Gastrocnemius medialis (tissue), 4 donors: ENCODE measurements at regions of chr10 and their contacts with region 1.

Region 1: DNA sequence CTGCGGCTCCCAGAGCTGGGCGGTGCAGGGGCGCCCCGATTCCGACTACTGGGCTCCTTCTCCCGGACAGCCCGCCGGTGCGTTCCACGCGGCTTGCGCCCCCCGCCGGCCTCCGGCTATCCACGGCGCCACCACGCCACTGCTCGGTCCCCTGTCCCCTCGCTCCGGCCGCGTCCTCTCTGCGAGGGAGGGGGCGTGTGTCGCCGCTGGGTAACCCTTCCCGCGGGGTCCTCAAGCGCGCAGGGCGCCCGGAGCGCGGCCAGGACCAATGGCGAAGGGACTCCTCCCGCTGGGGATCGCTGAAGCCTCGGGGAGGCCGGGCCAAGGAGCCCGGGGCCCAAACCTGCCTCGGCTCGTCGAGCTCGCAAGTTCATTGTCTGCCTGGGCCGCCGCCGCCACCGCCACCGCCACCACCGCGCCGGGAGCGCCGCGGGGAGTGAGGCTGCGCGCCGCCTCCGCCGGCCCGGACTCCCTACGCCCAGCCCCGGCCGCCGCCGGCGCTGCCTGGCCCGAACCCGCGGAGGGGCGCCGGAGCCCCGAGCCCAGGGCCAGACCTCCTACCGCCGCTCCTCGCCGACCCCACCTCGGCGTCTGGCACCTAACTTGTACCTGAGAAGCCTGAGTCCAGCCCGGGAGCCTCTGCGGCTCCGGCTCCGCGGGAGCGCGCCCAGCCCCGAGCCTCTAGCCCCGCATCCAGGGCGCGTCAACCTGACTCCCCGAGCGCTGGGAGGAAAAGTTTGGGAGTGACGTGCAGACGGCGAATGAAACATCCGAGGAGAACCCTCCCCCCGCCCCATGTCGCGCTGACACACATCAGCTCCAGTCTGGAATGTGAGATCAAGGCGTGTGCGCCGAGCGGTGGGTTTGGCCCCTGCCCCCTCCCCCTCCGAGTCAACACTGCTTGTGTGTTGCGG is at the start of gene CHST15:
- DNase-seq: peak; percentile 30 to 36
- ATAC-seq: peak; percentile 23 to 41
- H3K4me3 ChIP-seq: peak within 1 kb of the TSS; percentile 66 to 82 (median 78)
- H3K27ac ChIP-seq: peak within 1 kb of the TSS; percentile 79 to 91 (median 82)
- H3K4me1 ChIP-seq: peaks cover 41 to 44% of the 10 kb centered on the region in 2 donors
- H3K27me3 ChIP-seq: no peaks in the 10 kb centered on the region
- CTCF ChIP-seq: peak in 2 of 5 experiments; percentile 29 to 30
- POLR2A ChIP-seq: peak; percentile 61 to 83
- total RNA-seq, gene CHST15: 9.0 to 32.2 (median 20.3) TPM

Region 2: GRCh38 chr10:123913688-123914268 is 179.3 kb before region 1 on chr10:
- in situ Hi-C with region 1: no loop called
- intact Hi-C with region 1: no loop called
- DNase-seq: no peak
- ATAC-seq: peak in 1 of 2 donors; percentile 14
- H3K4me3 ChIP-seq: no peak overlapping the region
- H3K27ac ChIP-seq: no peak overlapping the region
- H3K4me1 ChIP-seq: no peaks in the 10 kb centered on the region
- H3K27me3 ChIP-seq: peaks cover 5 to 6% (median 5%) of the 10 kb centered on the region in 3 donors
- CTCF ChIP-seq: no peak
- POLR2A ChIP-seq: no peak

Region 3: DNA sequence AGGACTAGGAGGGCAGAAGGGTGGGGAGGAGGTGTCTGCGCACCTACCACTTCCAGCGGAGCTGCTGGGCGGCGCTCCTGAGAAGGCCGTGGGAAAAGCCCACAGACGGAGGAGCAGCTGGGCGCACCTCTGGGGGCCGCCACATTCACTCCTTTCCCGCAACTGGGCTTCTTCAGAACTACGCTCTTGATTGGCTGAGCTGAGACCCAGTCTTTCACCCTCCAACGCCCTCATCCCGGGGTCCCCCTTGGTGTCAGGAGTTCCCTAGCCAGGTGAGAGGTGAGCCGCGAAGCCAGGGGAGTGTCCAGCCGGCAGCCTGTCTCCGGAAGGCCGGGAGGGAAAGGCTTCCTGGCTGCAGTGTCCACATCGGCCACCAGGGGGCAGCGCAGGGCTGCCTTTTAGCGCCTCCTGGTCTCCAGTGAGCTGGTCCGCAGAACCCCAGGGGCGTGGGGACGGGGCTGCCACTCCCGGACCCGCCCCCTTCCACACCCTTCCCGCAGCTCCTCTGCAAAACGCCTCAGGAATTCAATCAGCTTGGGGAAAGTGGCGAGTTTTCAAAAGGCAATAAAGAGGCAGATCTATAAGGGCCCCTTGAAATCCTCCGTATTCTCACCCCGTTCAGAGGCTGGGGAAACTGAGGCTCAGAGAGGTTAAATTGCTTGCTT is 98.6 kb before region 1 on chr10:
- in situ Hi-C with region 1: no loop called
- intact Hi-C with region 1: loop called (anchors 10 kb)
- DNase-seq: peak; percentile 55 to 71
- ATAC-seq: peak; percentile 65 to 76
- H3K4me3 ChIP-seq: peak overlapping the region in 2 of 4 donors; percentile 1 to 7
- H3K27ac ChIP-seq: no peak overlapping the region
- H3K4me1 ChIP-seq: peaks cover 0 to 16% of the 10 kb centered on the region in 2 donors
- H3K27me3 ChIP-seq: peaks cover 20 to 34% (median 26%) of the 10 kb centered on the region in 3 donors
- CTCF ChIP-seq: peak; percentile 96 to 99 (median 98)
- POLR2A ChIP-seq: no peak

Region 4: DNA sequence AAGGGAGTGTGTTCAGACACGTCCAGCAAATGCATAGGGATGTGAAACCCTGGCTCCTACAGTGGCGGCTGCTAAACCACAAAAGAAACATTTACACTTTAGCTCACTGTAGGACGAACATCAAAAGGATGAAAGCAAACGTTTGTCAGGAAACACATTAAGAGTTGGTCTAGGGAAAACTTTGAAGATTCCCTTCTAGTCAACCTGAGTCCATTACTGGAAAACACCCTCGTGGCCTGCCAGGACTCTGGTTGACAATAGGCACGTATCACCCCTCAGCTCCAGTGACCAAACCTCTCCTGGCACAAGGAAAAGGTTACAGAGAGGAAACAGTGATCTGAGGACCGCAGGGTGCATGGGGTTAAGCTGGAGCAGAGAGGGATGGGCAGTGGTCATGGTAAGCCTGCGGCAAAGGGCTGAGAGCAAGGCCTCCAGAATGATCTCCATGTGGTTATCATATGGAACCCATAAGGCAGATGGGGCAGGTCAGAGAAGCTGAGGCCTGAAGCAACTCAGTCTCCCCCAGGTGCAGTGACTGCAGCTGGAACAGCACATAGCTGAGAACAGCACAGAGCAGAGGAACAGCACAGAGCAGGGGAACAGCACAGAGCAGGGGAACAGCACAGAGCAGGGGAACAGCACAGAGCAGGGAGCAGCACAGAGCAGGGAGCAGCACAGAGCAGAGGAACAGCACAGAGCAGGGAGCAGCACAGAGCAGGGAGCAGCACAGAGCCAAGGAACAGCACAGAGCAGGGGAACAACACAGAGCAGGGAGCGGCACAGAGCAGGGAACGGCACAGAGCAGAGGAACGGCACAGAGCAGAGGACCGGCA is 49.6 kb before region 1 on chr10:
- in situ Hi-C with region 1: no loop called
- intact Hi-C with region 1: loop called (anchors 5 kb)
- DNase-seq: no peak
- ATAC-seq: no peak
- H3K4me3 ChIP-seq: peak overlapping the region in 2 of 4 donors; percentile 1 to 15
- H3K27ac ChIP-seq: peak overlapping the region; percentile 46 to 82 (median 62)
- H3K4me1 ChIP-seq: peaks cover 10 to 17% of the 10 kb centered on the region in 2 donors
- H3K27me3 ChIP-seq: no peaks in the 10 kb centered on the region
- CTCF ChIP-seq: no peak
- POLR2A ChIP-seq: no peak

Region 5: GRCh38 chr10:124122211-124122610 is 29.1 kb after region 1 on chr10:
- in situ Hi-C with region 1: no loop called
- intact Hi-C with region 1: loop called (anchors 1 kb)
- DNase-seq: peak; percentile 86 to 89
- ATAC-seq: peak; percentile 84 to 95
- H3K4me3 ChIP-seq: no peak overlapping the region
- H3K27ac ChIP-seq: peak overlapping the region; percentile 49 to 77 (median 54)
- H3K4me1 ChIP-seq: peaks cover 4 to 16% of the 10 kb centered on the region in 2 donors
- H3K27me3 ChIP-seq: no peaks in the 10 kb centered on the region
- CTCF ChIP-seq: no peak
- POLR2A ChIP-seq: no peak

Region 6: DNA sequence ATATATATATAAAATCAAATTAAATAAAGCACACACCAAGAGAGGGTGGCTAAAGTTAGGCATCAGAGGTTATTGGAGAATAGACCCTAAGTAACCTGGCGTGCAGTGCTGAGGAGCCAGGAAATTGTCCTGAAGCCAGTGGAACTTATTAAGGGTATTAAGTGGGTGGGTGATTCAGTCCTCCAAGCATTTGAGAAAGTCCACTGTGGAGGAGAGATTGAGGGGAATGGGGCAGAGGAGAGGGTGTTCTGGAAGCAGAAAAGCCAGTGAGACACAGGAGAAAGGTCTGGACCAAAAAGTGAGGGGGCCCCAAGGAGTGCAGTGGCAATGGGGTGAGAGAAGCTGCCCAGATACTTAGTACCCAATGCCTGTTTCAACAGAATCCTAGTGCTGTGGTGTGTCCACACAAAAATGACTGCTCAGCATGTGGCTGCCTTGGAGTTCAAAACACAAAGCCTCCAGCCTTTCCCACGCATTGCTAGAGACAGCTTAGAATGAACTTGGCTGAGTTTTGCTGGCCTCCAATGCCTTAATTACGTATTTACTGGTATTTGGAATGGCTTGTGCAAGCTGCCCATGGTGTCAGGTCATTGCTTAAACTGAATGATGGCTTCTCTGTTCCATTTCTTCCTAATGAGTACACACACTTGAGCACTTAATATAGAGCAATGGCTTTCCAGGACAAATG is 45.2 kb after region 1 on chr10:
- in situ Hi-C with region 1: no loop called
- intact Hi-C with region 1: loop called (anchors 5 kb)
- DNase-seq: peak; percentile 62 to 63
- ATAC-seq: peak; percentile 84 to 87
- H3K4me3 ChIP-seq: no peak overlapping the region
- H3K27ac ChIP-seq: peak overlapping the region; percentile 47 to 65 (median 56)
- H3K4me1 ChIP-seq: peaks cover 11 to 14% of the 10 kb centered on the region in 2 donors
- H3K27me3 ChIP-seq: no peaks in the 10 kb centered on the region
- CTCF ChIP-seq: no peak
- POLR2A ChIP-seq: no peak

Region 7: DNA sequence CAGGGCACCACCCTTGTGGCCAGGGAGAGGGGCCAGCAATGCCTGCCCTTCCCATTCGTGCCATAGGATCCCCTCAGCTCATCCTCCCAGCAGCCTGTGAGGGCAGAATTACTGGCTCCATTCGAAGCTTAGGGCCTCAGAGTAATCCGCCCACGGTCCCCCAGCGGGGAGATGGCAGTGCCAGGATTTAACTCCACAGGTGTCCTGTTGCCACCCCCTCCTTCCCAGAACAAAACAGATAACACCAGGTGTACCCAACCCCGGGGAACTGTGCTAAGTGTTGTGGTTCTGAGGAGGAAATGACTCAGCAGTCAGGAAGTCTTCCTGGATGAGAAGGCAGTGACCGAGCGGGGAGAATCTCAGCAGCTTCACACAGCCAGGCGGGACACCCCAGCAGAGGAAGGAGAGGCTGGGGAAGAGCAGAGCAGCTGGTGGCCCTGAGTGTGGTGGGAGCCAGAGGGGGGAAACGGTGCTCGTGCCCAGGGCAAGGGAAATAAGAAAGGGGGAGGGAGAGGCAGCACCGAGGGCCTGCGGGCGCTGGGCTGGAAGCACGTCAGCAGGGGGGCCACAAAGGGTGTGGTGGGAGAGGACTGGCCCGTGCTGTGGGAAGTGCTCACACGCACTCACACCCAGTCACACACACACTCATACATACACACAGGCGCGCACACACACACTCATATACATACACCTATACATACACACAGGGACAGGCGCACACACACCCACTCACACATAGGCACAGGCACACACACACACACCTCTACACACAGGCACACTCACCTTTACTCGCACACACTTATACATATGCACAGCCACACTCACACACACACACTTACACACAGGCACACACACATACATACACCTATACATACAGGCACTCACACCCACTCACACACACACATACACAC is 60.1 kb after region 1 on chr10:
- in situ Hi-C with region 1: no loop called
- intact Hi-C with region 1: loop called (anchors 1 kb)
- DNase-seq: peak; percentile 53 to 54
- ATAC-seq: peak; percentile 66 to 78
- H3K4me3 ChIP-seq: peak overlapping the region in 1 of 4 donors; percentile 16
- H3K27ac ChIP-seq: peak overlapping the region; percentile 73 to 82 (median 74)
- H3K4me1 ChIP-seq: peaks cover 47 to 55% of the 10 kb centered on the region in 2 donors
- H3K27me3 ChIP-seq: no peaks in the 10 kb centered on the region
- CTCF ChIP-seq: no peak
- POLR2A ChIP-seq: no peak